ENCODE measurements at regions of chr4 and their contacts with region 1.

Region 1: GRCh38 chr4:78864405-78865024 is 74.7 kb downstream of the PAQR3 start:
- DNase-seq: peak; percentile 47
- H3K4me3 ChIP-seq: no peak overlapping the region
- H3K27ac ChIP-seq: no peak overlapping the region
- H3K4me1 ChIP-seq: no peaks in the 10 kb centered on the region
- H3K27me3 ChIP-seq: no peaks in the 10 kb centered on the region
- CTCF ChIP-seq: peak; percentile 56 to 80 (median 76)
- POLR2A ChIP-seq: no peak

Region 2: DNA sequence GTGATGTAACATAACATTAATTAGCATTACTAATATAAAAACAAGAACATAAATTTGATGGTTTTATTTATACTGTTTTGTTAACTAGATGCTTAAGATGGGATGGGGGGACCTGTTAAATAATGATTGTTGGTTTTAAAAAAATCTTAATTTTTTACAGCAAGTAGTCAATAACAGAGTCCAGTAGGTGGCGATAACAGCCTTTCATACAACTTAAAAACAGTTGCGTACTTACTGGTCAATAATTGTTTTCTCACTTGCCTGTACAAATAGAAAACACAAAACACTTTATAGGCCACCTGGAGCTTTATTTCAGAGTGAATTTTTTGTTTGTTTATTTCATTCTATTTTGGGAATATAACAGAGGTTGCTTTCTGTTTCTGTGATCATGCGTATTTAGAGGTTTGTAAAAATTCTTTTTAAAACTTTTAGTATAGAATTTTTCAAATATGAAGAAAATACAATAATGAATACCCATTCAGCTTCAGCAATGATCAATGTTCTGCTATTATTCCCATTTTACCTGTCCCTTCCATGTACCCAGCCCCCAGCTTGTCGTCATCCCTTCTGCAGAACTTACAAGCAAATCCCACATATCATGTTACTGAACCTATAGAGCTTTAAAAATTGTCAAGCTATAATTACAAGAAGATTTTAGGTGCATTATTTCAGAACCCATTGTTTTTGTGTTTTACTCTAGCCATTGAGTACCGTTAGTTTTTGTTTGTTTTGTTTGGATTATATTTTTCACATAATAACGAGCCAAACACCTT is 904.8 kb before region 1 on chr4:
- intact Hi-C with region 1: loop called (anchors 10 kb)
- DNase-seq: peak; percentile 23
- H3K4me3 ChIP-seq: no peak overlapping the region
- H3K27ac ChIP-seq: no peak overlapping the region
- H3K4me1 ChIP-seq: no peaks in the 10 kb centered on the region
- H3K27me3 ChIP-seq: no peaks in the 10 kb centered on the region
- CTCF ChIP-seq: peak; percentile 41 to 75 (median 62)
- POLR2A ChIP-seq: no peak

Region 3: DNA sequence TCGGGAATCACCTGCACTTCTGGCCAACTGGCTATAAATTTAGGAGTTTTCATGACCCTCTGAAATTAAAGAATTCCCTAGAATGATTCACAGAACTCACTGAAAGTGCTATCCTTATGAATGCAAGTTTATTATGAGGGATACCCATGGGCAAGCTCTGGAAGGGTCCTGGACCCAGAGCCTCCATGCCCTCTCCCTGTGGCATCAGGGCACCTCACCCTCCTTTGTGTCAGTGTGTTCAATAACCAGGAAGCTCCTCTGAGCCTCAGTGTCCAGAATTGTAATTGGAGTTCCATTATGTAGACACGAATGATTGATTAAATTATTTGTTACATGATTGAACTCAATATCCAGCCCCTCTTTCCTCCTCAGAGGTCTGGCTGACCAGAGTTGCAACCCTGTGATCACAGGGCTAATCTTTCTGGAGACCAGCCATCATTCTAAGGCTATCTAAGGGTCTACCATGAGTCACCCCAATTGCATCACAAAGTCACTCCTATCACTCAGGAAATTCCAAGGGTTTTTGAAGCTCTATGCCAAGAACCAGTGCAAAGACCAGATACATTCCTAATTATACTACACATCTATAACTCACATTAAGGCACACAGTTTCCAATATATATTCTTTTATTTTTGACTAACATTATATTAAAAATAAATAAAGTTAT is 304.1 kb before region 1 on chr4:
- intact Hi-C with region 1: no loop called
- DNase-seq: no peak
- H3K4me3 ChIP-seq: no peak overlapping the region
- H3K27ac ChIP-seq: peak overlapping the region; percentile 67 to 74
- H3K4me1 ChIP-seq: peaks cover 14% of the 10 kb centered on the region
- H3K27me3 ChIP-seq: no peaks in the 10 kb centered on the region
- CTCF ChIP-seq: no peak
- POLR2A ChIP-seq: no peak

Region 4: DNA sequence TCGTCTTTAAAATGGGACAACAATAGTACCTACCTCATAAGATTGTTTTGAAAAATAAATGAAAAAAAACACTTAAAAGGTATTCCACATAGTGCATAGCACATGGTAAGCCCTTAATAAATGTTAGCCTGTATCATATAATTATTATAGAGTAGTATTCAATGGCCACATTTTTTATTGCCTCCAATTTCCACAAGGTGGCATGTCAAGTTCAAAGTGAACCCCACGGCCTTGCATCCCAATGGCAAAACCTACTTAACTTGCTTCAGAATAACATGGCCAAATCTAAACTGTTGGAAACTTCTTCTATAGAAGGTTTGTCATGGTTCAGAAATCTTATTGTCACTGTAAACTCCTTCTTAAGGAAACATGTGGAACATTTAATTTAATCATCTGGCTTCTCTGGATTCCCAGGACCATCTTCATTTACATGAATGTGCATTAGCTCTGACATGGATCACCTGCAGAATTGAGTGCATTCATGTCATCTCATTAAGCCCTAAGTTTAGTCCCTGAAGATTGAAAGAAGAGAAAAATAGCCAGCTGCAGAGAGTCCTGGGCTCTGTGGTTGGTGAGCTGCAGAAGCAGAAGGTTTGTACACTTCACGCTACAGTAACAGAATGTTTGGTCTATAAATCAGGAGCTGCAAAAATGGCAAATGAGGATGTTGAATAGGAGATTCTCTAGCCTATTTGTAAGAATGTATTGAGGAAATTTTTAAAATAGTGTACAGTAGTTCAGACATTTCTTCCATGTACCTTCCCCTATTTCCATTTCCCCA is 251.9 kb before region 1 on chr4:
- intact Hi-C with region 1: loop called (anchors 5 kb)
- DNase-seq: peak; percentile 30
- H3K4me3 ChIP-seq: no peak overlapping the region
- H3K27ac ChIP-seq: no peak overlapping the region
- H3K4me1 ChIP-seq: peaks cover 5% of the 10 kb centered on the region
- H3K27me3 ChIP-seq: no peaks in the 10 kb centered on the region
- CTCF ChIP-seq: peak in 3 of 4 experiments; percentile 44 to 67 (median 57)
- POLR2A ChIP-seq: no peak

Region 5: DNA sequence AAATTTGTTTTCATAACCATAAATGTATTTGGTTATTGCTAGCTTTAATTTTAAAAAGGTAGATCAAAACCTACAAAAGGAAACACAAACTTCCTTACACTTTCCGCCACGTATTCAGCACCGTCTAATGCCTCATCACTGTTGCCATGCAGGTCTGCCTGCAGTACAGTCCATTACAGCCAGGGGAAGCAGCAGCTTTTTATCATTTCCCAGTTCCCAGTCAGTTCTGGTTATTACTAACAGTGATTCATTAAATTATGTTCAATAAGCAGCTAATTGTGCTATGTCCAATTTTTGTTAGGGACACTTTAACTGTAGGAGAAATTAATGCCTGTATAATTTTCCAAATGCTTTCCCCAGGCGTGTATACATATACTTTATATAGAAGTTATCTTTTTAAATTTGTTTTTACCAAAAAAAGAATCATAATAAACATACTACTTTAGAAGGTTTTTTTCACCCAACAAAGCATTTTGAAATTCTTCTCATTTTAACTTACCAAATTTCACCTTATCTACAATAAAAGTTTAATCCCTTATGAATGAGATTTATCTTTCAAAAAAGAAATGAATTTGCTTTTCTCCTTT is 219.7 kb before region 1 on chr4:
- intact Hi-C with region 1: loop called (anchors 10 kb)
- DNase-seq: peak; percentile 26
- H3K4me3 ChIP-seq: no peak overlapping the region
- H3K27ac ChIP-seq: peak overlapping the region; percentile 62 to 76
- H3K4me1 ChIP-seq: no peaks in the 10 kb centered on the region
- H3K27me3 ChIP-seq: no peaks in the 10 kb centered on the region
- CTCF ChIP-seq: peak; percentile 71 to 88 (median 78)
- POLR2A ChIP-seq: no peak

Measured in prostate gland (tissue), 2 donors.